ENCODE measurements at regions of chr4 and their contacts with region 1.

Region 1: GRCh38 chr4:87838890-87839591 is 6.3 kb downstream of the MEPE start:
- DNase-seq: no peak
- H3K4me3 ChIP-seq: no peak overlapping the region
- H3K27ac ChIP-seq: 0 out of 2 replicates have a peak overlapping the region, but pooled peaks have one; percentile 48
- H3K4me1 ChIP-seq: peaks cover 0 to 10% (median 4%) of the 10 kb centered on the region in 4 experiments; a peak in 5 of 7 replicates
- H3K27me3 ChIP-seq: no peaks in the 10 kb centered on the region
- CTCF ChIP-seq: peak in 2 of 3 experiments; percentile 57 to 66; a peak in 3 of 4 replicates
- EP300 ChIP-seq: no peak
- POLR2A ChIP-seq: no peak
- RAD21 ChIP-seq: peak; percentile 83 to 86

Region 2: GRCh38 chr4:87543835-87544461 is 295.1 kb before region 1 on chr4:
- CTCF ChIA-PET with region 1: interaction called, 40 read pairs
- POLR2A ChIA-PET with region 1: no interaction called
- DNase-seq: no peak
- H3K4me3 ChIP-seq: no peak overlapping the region
- H3K27ac ChIP-seq: no peak overlapping the region
- H3K4me1 ChIP-seq: peaks cover 0 to 2% (median under 1%) of the 10 kb centered on the region in 4 experiments; a peak in 2 of 7 replicates
- H3K27me3 ChIP-seq: no peaks in the 10 kb centered on the region
- CTCF ChIP-seq: peak in 2 of 3 experiments; percentile 61 to 71; a peak in 3 of 4 replicates
- EP300 ChIP-seq: no peak
- POLR2A ChIP-seq: no peak
- RAD21 ChIP-seq: peak; percentile 78 to 86

Region 3: GRCh38 chr4:87644286-87644685 is 194.8 kb before region 1 on chr4:
- CTCF ChIA-PET with region 1: interaction called, 13 read pairs
- POLR2A ChIA-PET with region 1: no interaction called
- DNase-seq: no peak
- H3K4me3 ChIP-seq: no peak overlapping the region
- H3K27ac ChIP-seq: no peak overlapping the region
- H3K4me1 ChIP-seq: no peaks in the 10 kb centered on the region
- H3K27me3 ChIP-seq: no peaks in the 10 kb centered on the region
- CTCF ChIP-seq: no peak
- EP300 ChIP-seq: no peak
- POLR2A ChIP-seq: no peak
- RAD21 ChIP-seq: no peak

Region 4: DNA sequence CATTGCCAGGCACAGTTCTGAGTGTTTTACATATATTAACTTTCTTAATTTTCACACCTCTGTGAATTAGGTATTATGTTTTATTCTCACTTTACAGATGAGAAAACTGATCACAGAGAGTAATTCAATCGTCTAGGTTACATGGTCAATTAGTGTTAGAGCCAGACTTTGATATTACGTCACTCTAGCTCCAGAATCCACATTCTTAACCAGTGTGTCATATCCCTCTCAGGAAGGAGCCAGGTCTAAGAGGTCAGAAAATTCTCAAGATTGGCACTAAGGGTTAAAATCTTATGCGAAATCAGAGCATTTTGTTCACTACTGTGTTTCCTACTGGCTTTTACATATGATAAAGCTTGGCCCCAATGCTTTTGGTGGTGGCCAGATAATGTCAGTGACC is 181.5 kb before region 1 on chr4:
- CTCF ChIA-PET with region 1: interaction called, 21 read pairs
- POLR2A ChIA-PET with region 1: no interaction called
- DNase-seq: no peak
- H3K4me3 ChIP-seq: no peak overlapping the region
- H3K27ac ChIP-seq: no peak overlapping the region
- H3K4me1 ChIP-seq: peaks cover 0 to 5% (median 0%) of the 10 kb centered on the region in 4 experiments; a peak in 3 of 7 replicates
- H3K27me3 ChIP-seq: no peaks in the 10 kb centered on the region
- CTCF ChIP-seq: no peak
- EP300 ChIP-seq: no peak
- POLR2A ChIP-seq: no peak
- RAD21 ChIP-seq: no peak

Region 5: GRCh38 chr4:87707279-87707918 is 131.6 kb before region 1 on chr4:
- CTCF ChIA-PET with region 1: interaction called, 13 read pairs
- POLR2A ChIA-PET with region 1: no interaction called
- DNase-seq: no peak
- H3K4me3 ChIP-seq: no peak overlapping the region
- H3K27ac ChIP-seq: no peak overlapping the region
- H3K4me1 ChIP-seq: peaks cover 0 to 7% (median 0%) of the 10 kb centered on the region in 4 experiments; a peak in 2 of 7 replicates
- H3K27me3 ChIP-seq: no peaks in the 10 kb centered on the region
- CTCF ChIP-seq: no peak
- EP300 ChIP-seq: no peak
- POLR2A ChIP-seq: no peak
- RAD21 ChIP-seq: no peak

Region 6: DNA sequence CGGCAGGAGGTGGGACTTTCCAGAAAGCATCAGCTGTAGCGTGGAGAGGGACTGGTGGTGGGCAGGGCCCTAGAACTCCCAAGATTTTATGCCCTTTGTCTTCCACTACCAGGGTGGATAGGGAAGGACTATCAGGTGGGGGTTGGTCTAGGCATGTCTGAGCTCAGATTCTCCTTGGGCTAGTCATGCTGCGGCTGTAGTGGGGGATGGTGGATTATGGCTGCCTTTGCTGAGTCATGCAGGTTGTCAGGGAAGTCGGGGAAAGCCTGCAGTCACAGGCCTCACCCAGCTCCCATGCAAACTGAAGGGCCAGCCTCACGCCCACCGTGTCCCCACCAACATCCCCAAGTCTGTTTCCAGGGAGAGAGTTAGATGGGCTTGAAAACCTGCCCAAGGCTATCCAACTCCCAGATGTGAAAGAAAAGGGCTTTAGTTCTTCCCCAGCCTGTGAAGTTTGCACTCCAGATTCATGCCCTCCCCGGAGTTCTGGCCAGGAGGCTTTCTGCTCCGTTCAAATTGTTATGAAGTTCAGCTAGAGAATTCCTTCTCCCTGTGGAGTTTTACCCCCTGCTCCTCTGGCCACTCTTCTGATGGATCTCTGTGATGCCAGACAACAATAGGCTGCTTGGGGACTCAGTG is 19.6 kb before region 1 on chr4:
- CTCF ChIA-PET with region 1: interaction called, 37 read pairs
- POLR2A ChIA-PET with region 1: no interaction called
- DNase-seq: no peak
- H3K4me3 ChIP-seq: no peak overlapping the region
- H3K27ac ChIP-seq: peak overlapping the region; percentile 36; the same call in 1 of the 2 replicates
- H3K4me1 ChIP-seq: peaks cover 0 to 3% (median 2%) of the 10 kb centered on the region in 4 experiments; a peak in 3 of 7 replicates
- H3K27me3 ChIP-seq: no peaks in the 10 kb centered on the region; a peak in 1 of 7 replicates
- CTCF ChIP-seq: no peak
- EP300 ChIP-seq: peak in 1 of 2 experiments; percentile 34; a peak in 1 of 3 replicates
- POLR2A ChIP-seq: no peak
- RAD21 ChIP-seq: no peak